ENCODE measurements at regions of chrX and their contacts with region 1.

Region 1: GRCh38 chrX:18855919-18856644 is 127.8 kb downstream of the PHKA2 start:
- DNase-seq: peak; percentile 90
- ATAC-seq: peak; percentile 94
- H3K4me3 ChIP-seq: no peak overlapping the region
- H3K27ac ChIP-seq: peak overlapping the region; percentile 96
- H3K4me1 ChIP-seq: peaks cover 19% of the 10 kb centered on the region
- H3K27me3 ChIP-seq: no peaks in the 10 kb centered on the region
- CTCF ChIP-seq: no peak
- EP300 ChIP-seq: peak; percentile 14 to 55; a peak in 1 of 4 replicates
- POLR2A ChIP-seq: no peak
- RAD21 ChIP-seq: peak; percentile 42; the same call in 1 of the 2 replicates

Region 2: GRCh38 chrX:18425199-18426003 is 430.7 kb before region 1 on chrX and contains the start of gene CDKL5:
- CTCF ChIA-PET with region 1: interaction called, 3 read pairs
- POLR2A ChIA-PET with region 1: interaction called, 6 read pairs
- RAD21 ChIA-PET with region 1: interaction called, 12 read pairs
- SMC1A ChIA-PET with region 1: interaction called, 9 read pairs
- in situ Hi-C with region 1: no loop called
- intact Hi-C with region 1: no loop called
- DNase-seq: peak; percentile 75
- ATAC-seq: peak; percentile 95
- H3K4me3 ChIP-seq: peak within 1 kb of the TSS; percentile 64
- H3K27ac ChIP-seq: no peak within 1 kb of the TSS; the same call in 1 of the 2 replicates
- H3K4me1 ChIP-seq: peaks cover 2% of the 10 kb centered on the region; the same call in 1 of the 2 replicates
- H3K27me3 ChIP-seq: 0 out of 4 replicates have a peak, but pooled peaks cover 0 to 2% of the 10 kb centered on the region in 2 experiments
- CTCF ChIP-seq: no peak
- EP300 ChIP-seq: no peak
- POLR2A ChIP-seq: peak; percentile 67
- RAD21 ChIP-seq: no peak
- polyA plus RNA-seq, gene CDKL5: 1.4 to 2.3 TPM

Region 3: GRCh38 chrX:18682979-18683387 is 173.1 kb before region 1 on chrX:
- CTCF ChIA-PET with region 1: no interaction called
- POLR2A ChIA-PET with region 1: interaction called, 3 read pairs
- RAD21 ChIA-PET with region 1: interaction called, 20 read pairs
- SMC1A ChIA-PET with region 1: interaction called, 8 read pairs
- in situ Hi-C with region 1: no loop called
- intact Hi-C with region 1: loop called (anchors 1 kb)
- DNase-seq: peak; percentile 26
- ATAC-seq: peak; percentile 61
- H3K4me3 ChIP-seq: no peak overlapping the region
- H3K27ac ChIP-seq: no peak overlapping the region
- H3K4me1 ChIP-seq: no peaks in the 10 kb centered on the region; the same call in 1 of the 2 replicates
- H3K27me3 ChIP-seq: no peaks in the 10 kb centered on the region
- CTCF ChIP-seq: no peak
- EP300 ChIP-seq: no peak
- POLR2A ChIP-seq: no peak
- RAD21 ChIP-seq: no peak

Region 4: GRCh38 chrX:18899796-18900447 is 43.8 kb after region 1 on chrX:
- CTCF ChIA-PET with region 1: no interaction called
- POLR2A ChIA-PET with region 1: no interaction called
- RAD21 ChIA-PET with region 1: no interaction called
- SMC1A ChIA-PET with region 1: no interaction called
- in situ Hi-C with region 1: no loop called
- intact Hi-C with region 1: no loop called
- DNase-seq: no peak
- ATAC-seq: peak; percentile 54; the same call in 2 of the 3 replicates
- H3K4me3 ChIP-seq: no peak overlapping the region
- H3K27ac ChIP-seq: no peak overlapping the region
- H3K4me1 ChIP-seq: no peaks in the 10 kb centered on the region
- H3K27me3 ChIP-seq: no peaks in the 10 kb centered on the region
- CTCF ChIP-seq: peak; percentile 40 to 55 (median 44); a peak in 3 of 6 replicates
- EP300 ChIP-seq: no peak
- POLR2A ChIP-seq: no peak
- RAD21 ChIP-seq: peak; percentile 68